HCT116 (cell line): ENCODE measurements at regions of chrX and their contacts with region 1.

Region 1: DNA sequence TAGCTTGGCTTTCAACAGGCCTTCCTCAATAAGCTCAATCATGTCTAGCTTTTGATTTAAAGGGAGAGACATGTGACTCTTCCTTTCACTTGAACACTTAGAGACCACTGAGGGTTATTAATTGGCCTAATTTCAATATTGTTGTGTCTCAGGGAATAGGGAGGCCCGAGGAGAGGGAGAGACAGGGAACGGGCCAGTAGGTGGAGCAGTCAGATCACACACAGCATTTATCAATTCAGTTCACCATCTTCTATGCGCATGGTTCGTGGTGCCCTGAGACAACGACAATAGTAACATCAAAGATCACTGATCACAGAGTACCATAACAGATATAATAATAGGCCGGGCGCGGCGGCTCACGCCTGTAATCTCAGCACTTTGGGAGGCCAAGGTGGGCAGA is 17.8 kb downstream of the ZNF81 start:
- DNase-seq: no peak
- ATAC-seq: no peak; the same call in 1 of the 2 replicates
- H3K4me3 ChIP-seq: no peak overlapping the region
- H3K27ac ChIP-seq: no peak overlapping the region
- H3K4me1 ChIP-seq: no peaks in the 10 kb centered on the region
- H3K27me3 ChIP-seq: no peaks in the 10 kb centered on the region
- CTCF ChIP-seq: peak; percentile 35 to 43 (median 39); a peak in 4 of 6 replicates
- POLR2A ChIP-seq: no peak
- RAD21 ChIP-seq: peak; percentile 61

Region 2: DNA sequence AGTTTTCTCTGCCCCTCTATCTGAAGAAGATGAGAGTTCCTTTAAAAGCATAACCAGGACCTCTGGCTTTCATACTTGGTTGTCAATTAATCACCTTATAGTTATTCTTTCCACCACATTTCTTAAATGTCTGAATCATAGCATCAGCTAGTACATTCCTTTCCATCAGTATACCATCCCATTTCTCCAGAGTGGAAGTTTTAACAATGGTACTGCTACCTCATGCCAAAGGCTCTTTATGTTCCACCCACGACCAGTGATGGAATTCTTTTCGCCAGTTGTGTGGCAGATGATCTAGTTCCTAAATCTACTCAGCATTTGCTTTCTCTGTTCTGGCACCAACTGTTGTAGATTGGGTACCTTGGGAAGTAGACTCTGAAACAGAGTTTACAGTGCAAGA is 1689.1 kb before region 1 on chrX:
- CTCF ChIA-PET with region 1: no interaction called
- POLR2A ChIA-PET with region 1: no interaction called
- RAD21 ChIA-PET with region 1: no interaction called
- intact Hi-C with region 1: no loop called
- DNase-seq: no peak
- ATAC-seq: no peak
- H3K4me3 ChIP-seq: no peak overlapping the region
- H3K27ac ChIP-seq: no peak overlapping the region
- H3K4me1 ChIP-seq: no peaks in the 10 kb centered on the region
- H3K27me3 ChIP-seq: no peaks in the 10 kb centered on the region
- CTCF ChIP-seq: no peak
- POLR2A ChIP-seq: no peak
- RAD21 ChIP-seq: no peak

Region 3: DNA sequence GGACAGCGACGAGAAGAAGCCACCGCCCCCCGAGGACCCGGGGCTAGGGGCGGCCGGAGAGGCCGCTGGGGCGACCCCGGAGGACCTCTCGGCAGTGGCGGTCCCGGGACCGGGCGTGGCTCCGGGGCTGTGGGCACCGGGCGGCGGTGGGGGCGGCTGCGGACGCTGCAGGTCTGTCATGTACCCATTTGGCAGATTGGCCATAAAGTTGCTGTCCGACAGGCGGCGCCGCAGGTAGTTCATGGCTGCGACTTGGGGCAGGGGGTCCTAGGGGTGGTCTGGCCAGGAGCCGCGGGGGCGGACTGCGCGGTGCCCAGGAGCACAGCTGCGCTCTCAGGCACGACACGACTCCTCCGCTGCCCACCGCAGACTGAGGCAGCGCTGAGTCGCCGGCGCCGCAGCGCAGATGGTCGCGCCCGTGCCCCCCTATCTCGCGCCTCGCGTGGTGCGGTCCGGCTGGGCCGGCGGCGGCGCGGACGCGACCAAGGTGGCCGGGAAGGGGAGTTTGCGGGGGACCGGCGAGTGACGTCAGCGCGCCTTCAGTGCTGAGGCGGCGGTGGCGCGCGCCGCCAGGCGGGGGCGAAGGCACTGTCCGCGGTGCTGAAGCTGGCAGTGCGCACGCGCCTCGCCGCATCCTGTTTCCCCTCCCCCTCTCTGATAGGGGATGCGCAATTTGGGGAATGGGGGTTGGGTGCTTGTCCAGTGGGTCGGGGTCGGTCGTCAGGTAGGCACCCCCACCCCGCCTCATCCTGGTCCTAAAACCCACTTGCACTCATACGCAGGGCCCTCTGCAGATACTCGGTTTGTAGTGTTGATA is 234.8 kb before region 1 on chrX and contains the start of gene SYN1:
- CTCF ChIA-PET with region 1: no interaction called
- POLR2A ChIA-PET with region 1: no interaction called
- RAD21 ChIA-PET with region 1: no interaction called
- intact Hi-C with region 1: no loop called
- DNase-seq: peak; percentile 42
- ATAC-seq: peak; percentile 90
- H3K4me3 ChIP-seq: no peak within 1 kb of the TSS
- H3K27ac ChIP-seq: no peak within 1 kb of the TSS
- H3K4me1 ChIP-seq: no peaks in the 10 kb centered on the region
- H3K27me3 ChIP-seq: no peaks in the 10 kb centered on the region
- CTCF ChIP-seq: no peak
- POLR2A ChIP-seq: no peak
- RAD21 ChIP-seq: no peak
- total RNA-seq, gene SYN1: 0.86 TPM

Region 4: DNA sequence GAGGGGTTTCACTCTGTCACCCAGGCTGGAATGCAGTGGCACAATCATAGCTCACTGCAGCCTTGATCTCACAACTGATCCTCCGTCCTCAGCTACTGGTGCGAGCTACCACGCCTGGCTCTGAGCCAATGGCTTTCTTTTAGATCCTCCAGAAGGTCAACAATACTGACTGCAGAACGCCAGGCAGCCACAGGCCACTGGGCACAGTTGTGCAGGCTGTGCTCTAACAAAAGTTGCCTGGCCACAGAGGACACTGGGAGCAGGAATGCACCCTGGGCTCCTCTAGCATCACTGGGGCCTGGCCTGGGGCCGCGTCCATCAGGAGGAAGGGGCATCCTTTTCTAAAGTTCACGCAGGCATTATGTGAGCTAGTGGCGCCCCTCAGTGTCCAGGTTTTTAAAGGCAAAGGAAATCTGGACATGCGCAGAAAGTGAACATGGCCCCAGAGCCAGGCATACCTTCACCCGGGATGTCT is 639.5 kb after region 1 on chrX:
- CTCF ChIA-PET with region 1: no interaction called
- POLR2A ChIA-PET with region 1: no interaction called
- RAD21 ChIA-PET with region 1: no interaction called
- intact Hi-C with region 1: loop called (anchors 10 kb)
- DNase-seq: peak; percentile 38
- ATAC-seq: peak; percentile 48
- H3K4me3 ChIP-seq: no peak overlapping the region
- H3K27ac ChIP-seq: no peak overlapping the region
- H3K4me1 ChIP-seq: peaks cover 10 to 60% of the 10 kb centered on the region in 2 experiments
- H3K27me3 ChIP-seq: no peaks in the 10 kb centered on the region
- CTCF ChIP-seq: peak in 1 of 3 experiments; percentile 49; a peak in 2 of 6 replicates
- POLR2A ChIP-seq: no peak
- RAD21 ChIP-seq: no peak